A549 (cell line): ENCODE measurements at regions of chr17 and their contacts with region 1.

Region 1: GRCh38 chr17:19433727-19434340 is 22.8 kb downstream of the RNF112 start:
- DNase-seq: no peak
- ATAC-seq: peak in 1 of 2 experiments; percentile 26; a peak in 1 of 6 replicates
- H3K4me3 ChIP-seq: no peak overlapping the region
- H3K27ac ChIP-seq: no peak overlapping the region
- H3K4me1 ChIP-seq: no peaks in the 10 kb centered on the region
- CTCF ChIP-seq: no peak
- EP300 ChIP-seq: no peak
- POLR2A ChIP-seq: no peak
- RAD21 ChIP-seq: 0 out of 5 replicates have a peak, but pooled peaks of 1 of the 2 experiments have one; percentile 11

Region 2: GRCh38 chr17:19327039-19327776 is 106.6 kb before region 1 on chr17:
- CTCF ChIA-PET with region 1: no interaction called
- POLR2A ChIA-PET with region 1: no interaction called
- DNase-seq: peak; percentile 62 to 77
- ATAC-seq: peak; percentile 62 to 76
- H3K4me3 ChIP-seq: no peak overlapping the region
- H3K27ac ChIP-seq: peak overlapping the region; percentile 30 to 63
- H3K4me1 ChIP-seq: peaks cover 23% of the 10 kb centered on the region
- CTCF ChIP-seq: no peak
- EP300 ChIP-seq: no peak
- POLR2A ChIP-seq: no peak
- RAD21 ChIP-seq: no peak

Region 3: DNA sequence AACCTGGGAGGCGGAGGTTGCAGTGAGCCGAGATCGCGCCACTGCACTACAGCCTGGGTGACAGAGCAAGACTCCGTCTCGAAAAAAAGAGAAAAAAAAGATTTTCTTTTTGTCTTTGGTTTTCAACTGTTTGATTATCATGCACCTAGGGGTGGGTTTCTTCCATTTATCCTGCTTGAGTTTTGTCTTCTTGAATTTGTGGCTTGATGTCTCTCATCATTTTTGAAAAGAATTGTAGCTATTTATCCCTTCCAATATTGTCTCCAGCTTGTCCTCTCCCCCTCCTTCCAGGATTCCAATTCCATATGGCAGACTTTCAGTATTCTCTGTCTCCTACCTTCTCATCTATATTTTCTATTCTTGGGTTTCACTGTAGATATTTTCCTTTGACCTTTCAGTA is 79.1 kb before region 1 on chr17:
- CTCF ChIA-PET with region 1: no interaction called
- POLR2A ChIA-PET with region 1: no interaction called
- DNase-seq: no peak
- ATAC-seq: no peak
- H3K4me3 ChIP-seq: no peak overlapping the region
- H3K27ac ChIP-seq: no peak overlapping the region; a peak in 1 of 6 replicates
- H3K4me1 ChIP-seq: peaks cover 12% of the 10 kb centered on the region
- CTCF ChIP-seq: no peak
- EP300 ChIP-seq: no peak
- POLR2A ChIP-seq: no peak
- RAD21 ChIP-seq: no peak

Region 4: GRCh38 chr17:19377602-19378392 is 56.0 kb before region 1 on chr17:
- CTCF ChIA-PET with region 1: interaction called, 16 read pairs
- POLR2A ChIA-PET with region 1: no interaction called
- DNase-seq: peak; percentile 100
- ATAC-seq: peak; percentile 86 to 90
- H3K4me3 ChIP-seq: peak overlapping the region; percentile 80
- H3K27ac ChIP-seq: peak overlapping the region; percentile 90 to 91
- H3K4me1 ChIP-seq: peaks cover 16% of the 10 kb centered on the region
- CTCF ChIP-seq: no peak
- EP300 ChIP-seq: no peak
- POLR2A ChIP-seq: peak; percentile 52; the same call in 1 of the 2 replicates
- RAD21 ChIP-seq: no peak

Region 5: DNA sequence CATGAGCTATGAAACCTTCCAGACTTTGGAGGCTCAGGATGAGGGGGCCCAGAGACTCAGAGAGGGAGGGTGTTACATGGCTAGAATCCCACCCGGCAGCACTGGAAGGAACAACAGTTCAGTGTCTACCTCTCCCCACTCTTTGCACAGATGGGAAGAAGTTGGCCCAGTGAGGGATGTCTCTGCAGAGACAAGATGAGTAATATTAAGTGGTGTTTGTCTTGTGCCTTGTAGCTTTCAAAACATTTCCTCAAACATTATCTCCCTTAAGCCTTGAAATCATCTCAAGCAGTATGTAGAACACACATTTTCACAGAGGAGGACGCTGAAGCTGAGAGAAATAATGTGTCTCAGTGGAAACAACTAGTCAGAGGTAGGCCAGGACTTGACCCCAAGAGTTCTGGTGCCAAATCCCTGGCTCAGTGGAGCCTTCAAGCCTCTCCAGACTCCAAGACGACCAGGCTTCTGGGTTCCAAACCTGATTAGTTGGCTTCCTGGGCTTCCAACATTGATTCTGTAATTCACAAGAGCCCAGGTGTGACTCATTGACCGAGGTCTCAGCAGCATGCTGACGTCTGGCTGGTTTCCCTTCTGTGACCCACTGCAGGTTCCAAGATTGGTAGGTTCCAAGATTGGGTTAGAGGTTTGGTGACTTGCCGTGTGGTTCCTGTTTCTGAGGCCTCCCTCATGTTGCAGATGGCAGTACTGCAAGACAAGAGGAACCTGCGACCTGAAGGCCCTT is 15.4 kb before region 1 on chr17:
- CTCF ChIA-PET with region 1: no interaction called
- POLR2A ChIA-PET with region 1: no interaction called
- DNase-seq: peak in 1 of 2 experiments; percentile 28
- ATAC-seq: peak in 1 of 2 experiments; percentile 46; a peak in 2 of 6 replicates
- H3K4me3 ChIP-seq: no peak overlapping the region
- H3K27ac ChIP-seq: no peak overlapping the region
- H3K4me1 ChIP-seq: peaks cover 6% of the 10 kb centered on the region
- CTCF ChIP-seq: no peak
- EP300 ChIP-seq: no peak
- POLR2A ChIP-seq: no peak
- RAD21 ChIP-seq: no peak